ENCODE measurements at regions of chr1 and their contacts with region 1.

Region 1: DNA sequence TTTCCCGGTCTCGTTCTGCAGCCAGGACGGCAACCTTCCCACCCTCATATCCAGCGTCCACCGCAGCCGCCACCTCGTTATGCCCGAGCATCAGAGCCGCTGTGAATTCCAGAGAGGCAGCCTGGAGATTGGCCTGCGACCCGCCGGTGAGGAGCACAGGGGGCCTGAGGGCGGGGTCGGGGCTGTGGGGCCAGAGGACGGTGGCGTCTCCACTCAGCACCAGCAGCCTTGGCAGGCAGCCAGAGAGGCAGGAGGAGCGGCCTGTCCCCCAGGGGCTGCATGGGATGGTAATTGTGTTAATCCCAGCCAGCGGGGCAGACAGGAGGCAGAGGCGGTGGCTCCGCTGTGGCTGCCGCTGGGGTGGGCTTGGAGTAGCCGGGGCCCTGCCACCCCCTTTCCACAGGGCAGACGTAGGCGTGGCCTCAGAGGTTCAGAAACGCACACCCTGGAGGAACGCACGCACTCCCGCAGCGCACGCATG is 12.1 kb downstream of the SAMD11 start:
- DNase-seq: no peak
- H3K4me3 ChIP-seq: peak overlapping the region in 1 of 3 donors; percentile 17
- H3K27ac ChIP-seq: no peak overlapping the region
- H3K4me1 ChIP-seq: peaks cover 5 to 13% of the 10 kb centered on the region in 2 donors
- H3K27me3 ChIP-seq: peaks cover 5 to 48% of the 10 kb centered on the region in 2 donors
- CTCF ChIP-seq: no peak
- POLR2A ChIP-seq: no peak

Region 2: GRCh38 chr1:920521-920920 is 15.3 kb before region 1 on chr1:
- intact Hi-C with region 1: loop called (anchors 1 kb)
- DNase-seq: no peak
- H3K4me3 ChIP-seq: peak overlapping the region in 1 of 3 donors; percentile 33
- H3K27ac ChIP-seq: no peak overlapping the region
- H3K4me1 ChIP-seq: peaks cover 21% of the 10 kb centered on the region in 2 donors
- H3K27me3 ChIP-seq: peaks cover 12 to 83% of the 10 kb centered on the region in 2 donors
- CTCF ChIP-seq: no peak
- POLR2A ChIP-seq: no peak

Region 3: DNA sequence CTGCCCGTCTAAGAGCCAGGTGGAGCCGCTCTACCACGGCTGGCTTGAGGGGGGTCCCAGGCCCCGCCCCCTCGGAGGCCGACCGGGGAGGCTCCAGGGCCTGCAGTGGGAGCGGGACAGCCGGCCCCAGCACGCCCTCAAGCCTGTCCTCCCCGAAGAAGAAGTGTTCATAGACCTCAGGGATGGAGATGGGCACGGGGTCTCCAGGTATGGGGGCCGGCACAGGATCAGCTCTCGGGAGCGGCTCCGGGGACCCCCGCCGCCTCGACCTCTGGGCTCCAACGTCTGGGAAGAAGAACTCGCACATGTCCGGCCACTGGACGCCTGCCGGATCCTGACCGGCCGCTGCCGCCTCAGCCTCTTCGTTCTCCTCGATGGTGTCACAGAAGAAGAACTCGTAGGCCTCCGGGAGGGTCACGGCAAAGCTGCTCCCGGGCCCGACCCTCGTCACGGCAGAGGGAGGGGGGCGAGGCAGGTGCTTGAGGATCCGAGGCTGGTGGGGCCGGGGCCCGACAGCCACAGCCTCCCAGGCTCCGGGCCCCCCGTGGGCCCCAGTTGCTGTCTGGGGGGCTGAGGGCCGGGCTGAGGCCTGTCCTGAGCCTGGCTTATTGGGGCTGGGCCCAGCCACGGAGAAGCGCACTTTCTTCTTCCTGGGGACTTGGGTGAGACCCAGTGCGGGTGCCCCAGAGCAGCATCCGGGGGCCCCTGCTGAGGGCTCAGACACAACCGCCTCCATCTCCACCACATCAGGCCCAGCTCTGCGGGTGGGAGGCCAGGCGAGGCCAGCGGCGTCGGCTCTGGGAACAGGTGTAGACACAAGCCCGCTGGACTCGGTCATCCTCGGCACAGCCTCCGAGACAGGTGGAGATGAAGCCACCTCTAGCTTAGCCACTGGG is 43.3 kb after region 1 on chr1:
- intact Hi-C with region 1: loop called (anchors 1 kb)
- DNase-seq: no peak
- H3K4me3 ChIP-seq: no peak overlapping the region
- H3K27ac ChIP-seq: no peak overlapping the region
- H3K4me1 ChIP-seq: peaks cover 0 to 6% of the 10 kb centered on the region in 2 donors
- H3K27me3 ChIP-seq: peaks cover 0 to 17% of the 10 kb centered on the region in 2 donors
- CTCF ChIP-seq: no peak
- POLR2A ChIP-seq: no peak